ENCODE measurements at regions of chr11 and their contacts with region 1.

Region 1: DNA sequence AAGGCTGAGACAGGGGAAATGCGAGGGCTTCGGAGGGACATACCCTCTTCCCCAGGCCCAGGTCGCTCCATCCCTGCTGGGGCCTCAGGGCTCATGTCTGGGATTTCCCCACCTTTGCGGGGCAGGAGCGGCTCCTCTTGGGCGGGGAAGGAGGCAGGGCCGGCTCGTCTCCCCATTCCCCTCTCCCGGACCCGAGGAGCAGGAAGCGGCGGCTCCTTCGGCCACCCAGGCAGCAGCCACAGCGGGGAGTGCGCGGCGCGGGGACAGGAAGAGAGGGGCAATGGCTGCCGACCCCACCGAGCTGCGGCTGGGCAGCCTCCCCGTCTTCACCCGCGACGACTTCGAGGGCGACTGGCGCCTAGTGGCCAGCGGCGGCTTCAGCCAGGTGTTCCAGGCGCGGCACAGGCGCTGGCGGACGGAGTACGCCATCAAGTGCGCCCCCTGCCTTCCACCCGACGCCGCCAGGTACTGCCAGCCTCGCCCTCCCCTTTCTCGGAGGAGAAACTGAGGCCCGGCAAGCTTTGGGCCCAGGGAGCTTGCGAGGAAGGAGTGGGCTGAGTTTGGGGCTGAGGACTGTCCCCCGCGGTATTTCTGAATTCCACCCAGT is at the start of gene ANKK1:
- DNase-seq: peak; percentile 50
- H3K4me3 ChIP-seq: peak within 1 kb of the TSS; percentile 24 to 29
- H3K27ac ChIP-seq: peak within 1 kb of the TSS in 1 of 2 donors; percentile 53
- H3K4me1 ChIP-seq: no peaks in the 10 kb centered on the region
- H3K27me3 ChIP-seq: no peaks in the 10 kb centered on the region
- CTCF ChIP-seq: peak; percentile 34 to 79 (median 70)
- POLR2A ChIP-seq: no peak
- total RNA-seq, gene ANKK1: 0.97 to 2.4 TPM

Region 2: GRCh38 chr11:113314389-113315301 is 73.1 kb before region 1 on chr11 and contains the start of gene TTC12:
- intact Hi-C with region 1: loop called (anchors 5 kb)
- DNase-seq: peak; percentile 89
- H3K4me3 ChIP-seq: peak within 1 kb of the TSS; percentile 54 to 72
- H3K27ac ChIP-seq: peak within 1 kb of the TSS; percentile 85 to 89
- H3K4me1 ChIP-seq: peaks cover 4% of the 10 kb centered on the region
- H3K27me3 ChIP-seq: no peaks in the 10 kb centered on the region
- CTCF ChIP-seq: no peak
- POLR2A ChIP-seq: peak; percentile 58
- total RNA-seq, gene TTC12: 21.6 TPM

Measured in prostate gland (tissue), 2 donors.